ENCODE measurements at regions of chr1 and their contacts with region 1.

Region 1: GRCh38 chr1:221035680-221036153 is 156.5 kb downstream of the HLX start:
- DNase-seq: peak; percentile 84
- H3K4me3 ChIP-seq: peak overlapping the region in 1 of 3 experiments; percentile 42
- H3K27ac ChIP-seq: peak overlapping the region; percentile 69
- H3K4me1 ChIP-seq: peaks cover 48% of the 10 kb centered on the region
- H3K27me3 ChIP-seq: no peaks in the 10 kb centered on the region
- CTCF ChIP-seq: no peak
- POLR2A ChIP-seq: no peak

Region 2: DNA sequence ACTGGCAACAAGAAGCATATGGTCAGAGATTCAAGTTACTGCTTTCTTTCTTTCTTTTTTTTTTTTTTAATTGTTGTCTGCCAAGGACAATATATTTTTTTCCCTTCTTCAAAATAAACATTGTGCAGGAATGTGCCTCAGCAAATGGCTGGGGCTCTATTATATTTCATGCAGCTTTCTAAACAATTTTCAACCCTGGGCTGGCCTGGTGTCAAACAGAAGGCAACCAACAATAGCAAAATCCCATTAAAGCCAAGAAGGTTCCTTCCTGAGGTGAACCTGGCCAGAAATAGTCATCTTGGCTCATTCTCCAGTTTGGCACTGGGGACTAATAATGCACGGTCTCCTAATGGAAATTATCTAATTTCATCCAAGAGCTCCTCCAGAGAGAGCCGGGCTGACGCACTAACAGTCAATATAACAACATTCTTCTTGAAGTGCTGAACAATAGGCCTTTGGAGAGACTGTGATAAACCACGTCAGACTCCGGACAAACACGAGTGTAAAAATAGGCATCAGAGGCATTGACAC is 192.2 kb before region 1 on chr1:
- CTCF ChIA-PET with region 1: no interaction called
- POLR2A ChIA-PET with region 1: no interaction called
- dilution Hi-C with region 1: no loop called
- intact Hi-C with region 1: loop called (anchors 1 kb)
- DNase-seq: peak; percentile 99
- H3K4me3 ChIP-seq: no peak overlapping the region
- H3K27ac ChIP-seq: peak overlapping the region; percentile 65
- H3K4me1 ChIP-seq: peaks cover 13% of the 10 kb centered on the region
- H3K27me3 ChIP-seq: peaks cover 0 to 3% of the 10 kb centered on the region in 2 experiments
- CTCF ChIP-seq: no peak
- POLR2A ChIP-seq: no peak

Region 3: GRCh38 chr1:221089266-221089665 is 53.5 kb after region 1 on chr1:
- CTCF ChIA-PET with region 1: interaction called, 3 read pairs
- POLR2A ChIA-PET with region 1: no interaction called
- dilution Hi-C with region 1: no loop called
- intact Hi-C with region 1: loop called (anchors 5 kb)
- DNase-seq: peak; percentile 19
- H3K4me3 ChIP-seq: no peak overlapping the region
- H3K27ac ChIP-seq: peak overlapping the region; percentile 15
- H3K4me1 ChIP-seq: peaks cover 11% of the 10 kb centered on the region
- H3K27me3 ChIP-seq: no peaks in the 10 kb centered on the region
- CTCF ChIP-seq: no peak
- POLR2A ChIP-seq: no peak

Region 4: GRCh38 chr1:221161571-221162041 is 125.9 kb after region 1 on chr1:
- CTCF ChIA-PET with region 1: interaction called, 6 read pairs
- POLR2A ChIA-PET with region 1: no interaction called
- dilution Hi-C with region 1: no loop called
- intact Hi-C with region 1: loop called (anchors 1 kb)
- DNase-seq: peak; percentile 94
- H3K4me3 ChIP-seq: no peak overlapping the region
- H3K27ac ChIP-seq: peak overlapping the region; percentile 34
- H3K4me1 ChIP-seq: peaks cover 40% of the 10 kb centered on the region
- H3K27me3 ChIP-seq: no peaks in the 10 kb centered on the region
- CTCF ChIP-seq: no peak
- POLR2A ChIP-seq: peak; percentile 27

Region 5: GRCh38 chr1:221217029-221217428 is 181.3 kb after region 1 on chr1:
- CTCF ChIA-PET with region 1: no interaction called
- POLR2A ChIA-PET with region 1: no interaction called
- dilution Hi-C with region 1: no loop called
- intact Hi-C with region 1: loop called (anchors 1 kb)
- DNase-seq: peak; percentile 92
- H3K4me3 ChIP-seq: no peak overlapping the region
- H3K27ac ChIP-seq: peak overlapping the region; percentile 6
- H3K4me1 ChIP-seq: peaks cover 14% of the 10 kb centered on the region
- H3K27me3 ChIP-seq: peaks cover 0 to 3% of the 10 kb centered on the region in 2 experiments
- CTCF ChIP-seq: no peak
- POLR2A ChIP-seq: no peak

Region 6: DNA sequence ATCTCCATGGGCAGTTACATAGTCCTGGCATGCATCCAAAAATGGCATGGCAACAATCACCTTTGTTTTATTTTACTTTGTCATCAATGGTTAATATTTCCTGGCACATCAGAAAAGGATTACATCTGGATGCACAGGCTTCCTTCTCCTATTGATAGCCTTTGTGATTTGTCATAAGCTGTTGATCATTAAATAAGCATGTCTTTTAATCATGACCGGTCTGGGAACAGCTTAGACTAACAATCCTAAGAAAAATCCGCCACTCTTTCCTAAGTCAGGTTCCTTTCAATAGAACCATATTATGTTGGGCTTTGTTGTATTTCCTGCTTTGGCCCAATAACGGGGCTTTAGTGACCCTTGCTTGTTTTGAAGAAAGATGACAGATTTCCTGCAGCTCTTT is 375.6 kb after region 1 on chr1:
- CTCF ChIA-PET with region 1: no interaction called
- POLR2A ChIA-PET with region 1: no interaction called
- dilution Hi-C with region 1: no loop called
- intact Hi-C with region 1: loop called (anchors 2 kb)
- DNase-seq: peak; percentile 85
- H3K4me3 ChIP-seq: no peak overlapping the region
- H3K27ac ChIP-seq: peak overlapping the region; percentile 85
- H3K4me1 ChIP-seq: peaks cover 37% of the 10 kb centered on the region
- H3K27me3 ChIP-seq: peaks cover 0 to 6% of the 10 kb centered on the region in 2 experiments
- CTCF ChIP-seq: no peak
- POLR2A ChIP-seq: no peak

Measured in endothelial cell of umbilical vein (primary cell).